ENCODE measurements at regions of chr11 and their contacts with region 1.

Region 1: DNA sequence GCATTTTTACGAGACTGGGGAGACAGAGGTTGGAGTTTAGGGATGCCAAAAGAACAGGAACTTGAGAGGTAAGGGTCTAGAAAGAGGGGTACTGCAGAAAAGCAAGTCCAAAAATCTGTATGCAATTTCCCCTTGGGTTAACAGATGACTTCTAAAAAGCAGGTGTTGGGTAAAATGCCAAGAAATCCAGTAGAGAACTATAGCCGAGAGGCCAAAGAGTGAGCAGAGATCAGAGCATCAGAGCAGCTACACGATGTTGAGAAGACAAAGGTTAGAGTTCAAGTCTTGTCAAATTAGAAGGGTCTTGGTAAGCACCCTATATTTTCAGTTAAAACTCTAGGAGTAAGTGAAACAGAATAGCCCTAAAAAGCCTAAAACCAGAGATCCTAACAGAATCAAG is 145.2 kb downstream of the FCHSD2 start:
- DNase-seq: no peak
- H3K4me3 ChIP-seq: no peak overlapping the region
- H3K27ac ChIP-seq: no peak overlapping the region
- H3K4me1 ChIP-seq: peaks cover 18% of the 10 kb centered on the region
- H3K27me3 ChIP-seq: no peaks in the 10 kb centered on the region
- CTCF ChIP-seq: no peak

Region 2: DNA sequence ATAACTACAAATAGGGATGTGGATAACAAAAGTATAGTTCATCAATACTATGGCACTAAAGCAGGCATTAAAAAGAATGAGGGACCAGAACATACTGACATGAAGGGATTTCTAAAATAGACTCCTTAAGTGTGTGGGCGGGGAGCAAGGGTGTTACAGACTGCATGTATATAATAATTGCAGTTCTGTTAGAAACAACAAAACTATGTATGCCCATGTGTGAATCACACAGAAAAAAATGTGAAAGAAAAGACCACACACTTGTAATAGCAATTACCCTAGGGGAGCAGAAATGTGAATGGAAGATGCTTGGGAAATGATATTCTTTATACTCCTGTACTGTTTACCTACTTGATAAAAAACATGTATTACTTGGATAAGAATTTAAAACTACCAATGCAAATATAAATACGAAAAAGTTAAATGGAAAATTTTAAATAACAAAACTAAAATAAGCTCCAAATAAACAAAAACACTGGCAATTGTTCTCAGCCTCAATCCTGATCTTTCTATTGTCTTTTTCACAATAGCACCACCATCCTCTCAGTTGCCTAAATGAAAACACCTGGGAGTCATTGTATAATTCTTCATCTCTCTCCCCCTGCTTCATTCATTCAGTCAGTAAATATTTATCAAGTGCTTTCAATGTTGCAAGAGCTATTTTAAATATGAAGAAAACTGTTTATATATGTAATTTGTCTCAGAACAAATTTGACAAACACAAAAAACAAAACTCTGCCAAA is 15.3 kb after region 1 on chr11:
- CTCF ChIA-PET with region 1: no interaction called
- POLR2A ChIA-PET with region 1: interaction called, 31 read pairs
- intact Hi-C with region 1: no loop called
- DNase-seq: no peak
- H3K4me3 ChIP-seq: no peak overlapping the region
- H3K27ac ChIP-seq: no peak overlapping the region
- H3K4me1 ChIP-seq: no peaks in the 10 kb centered on the region
- H3K27me3 ChIP-seq: no peaks in the 10 kb centered on the region
- CTCF ChIP-seq: no peak

Region 3: DNA sequence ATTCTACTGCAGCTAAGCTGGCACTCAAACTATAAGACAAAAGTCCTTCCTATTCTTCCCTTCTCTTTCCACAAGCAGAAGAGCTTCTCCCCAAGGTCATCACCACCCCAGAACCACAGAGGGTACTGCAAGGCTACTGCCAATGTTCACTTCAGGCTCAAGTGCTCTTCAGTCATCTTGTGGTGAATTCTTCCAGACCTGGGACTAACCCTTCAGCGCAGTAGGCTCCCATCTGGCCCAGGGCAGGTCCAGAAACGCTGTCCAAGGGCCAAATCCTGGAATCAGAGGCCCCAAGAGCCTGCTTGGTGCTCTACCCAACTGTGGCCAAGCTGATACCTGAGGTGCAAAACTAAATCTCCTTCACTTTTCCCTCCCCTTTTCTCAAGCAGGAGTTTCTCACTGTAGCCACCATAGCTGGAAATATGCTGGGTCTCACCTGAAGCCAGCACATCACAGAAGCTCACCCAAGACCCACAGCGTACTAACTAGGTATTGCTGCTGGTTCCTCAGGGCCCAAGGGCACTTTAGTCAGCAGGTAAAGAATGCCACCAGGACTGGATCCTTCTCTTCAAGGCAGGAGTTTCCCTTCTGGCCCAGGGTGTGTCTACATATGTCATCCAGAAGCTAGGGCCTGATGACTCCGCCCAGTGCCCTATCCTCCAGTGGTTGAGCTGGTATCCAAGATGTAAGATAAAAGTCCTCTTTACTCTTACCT is 117.3 kb after region 1 on chr11:
- CTCF ChIA-PET with region 1: no interaction called
- POLR2A ChIA-PET with region 1: no interaction called
- intact Hi-C with region 1: no loop called
- DNase-seq: peak; percentile 78 to 94
- H3K4me3 ChIP-seq: peak overlapping the region; percentile 2; the same call in 1 of the 2 replicates
- H3K27ac ChIP-seq: peak overlapping the region; percentile 64
- H3K4me1 ChIP-seq: peaks cover 27% of the 10 kb centered on the region
- H3K27me3 ChIP-seq: no peaks in the 10 kb centered on the region
- CTCF ChIP-seq: no peak